GM12878 (cell line): ENCODE measurements at regions of chr1 and their contacts with region 1.

Region 1: DNA sequence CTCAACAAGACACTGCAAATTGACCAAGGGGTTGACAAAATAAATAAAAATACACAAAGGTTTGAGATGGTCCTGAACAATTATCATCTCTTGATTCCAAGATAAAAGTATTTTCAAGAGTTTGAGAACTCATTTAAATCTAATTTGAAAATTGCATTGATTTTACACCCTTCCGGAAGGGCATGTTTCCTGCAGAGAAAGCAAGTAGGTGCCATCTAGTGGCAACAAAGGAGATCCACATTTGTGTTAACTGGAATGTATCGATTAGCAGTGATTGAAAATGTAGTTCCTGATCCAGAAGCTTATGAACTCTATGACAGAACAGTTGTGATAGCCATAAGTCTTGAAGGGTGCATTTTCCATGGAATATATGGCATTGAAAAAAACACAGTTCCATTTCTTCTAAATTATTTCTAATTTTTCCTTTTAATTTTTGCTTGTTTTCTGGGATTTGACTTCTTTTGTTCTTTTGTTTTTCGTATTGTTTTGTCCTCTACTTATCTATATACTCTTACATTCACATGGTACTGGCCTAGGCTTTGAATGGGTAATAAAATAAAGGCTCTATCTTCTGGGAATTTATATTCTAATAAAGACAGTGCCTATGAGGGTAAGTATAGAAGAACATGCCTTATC is 143.7 kb downstream of the DNM3 start:
- DNase-seq: no peak
- ATAC-seq: peak; percentile 88
- H3K4me3 ChIP-seq: no peak overlapping the region
- H3K27ac ChIP-seq: no peak overlapping the region
- H3K4me1 ChIP-seq: no peaks in the 10 kb centered on the region
- H3K27me3 ChIP-seq: no peaks in the 10 kb centered on the region; a peak in 1 of 4 replicates
- CTCF ChIP-seq: peak; percentile 71 to 77 (median 74)
- EP300 ChIP-seq: no peak
- POLR2A ChIP-seq: no peak
- RAD21 ChIP-seq: peak; percentile 76

Region 2: DNA sequence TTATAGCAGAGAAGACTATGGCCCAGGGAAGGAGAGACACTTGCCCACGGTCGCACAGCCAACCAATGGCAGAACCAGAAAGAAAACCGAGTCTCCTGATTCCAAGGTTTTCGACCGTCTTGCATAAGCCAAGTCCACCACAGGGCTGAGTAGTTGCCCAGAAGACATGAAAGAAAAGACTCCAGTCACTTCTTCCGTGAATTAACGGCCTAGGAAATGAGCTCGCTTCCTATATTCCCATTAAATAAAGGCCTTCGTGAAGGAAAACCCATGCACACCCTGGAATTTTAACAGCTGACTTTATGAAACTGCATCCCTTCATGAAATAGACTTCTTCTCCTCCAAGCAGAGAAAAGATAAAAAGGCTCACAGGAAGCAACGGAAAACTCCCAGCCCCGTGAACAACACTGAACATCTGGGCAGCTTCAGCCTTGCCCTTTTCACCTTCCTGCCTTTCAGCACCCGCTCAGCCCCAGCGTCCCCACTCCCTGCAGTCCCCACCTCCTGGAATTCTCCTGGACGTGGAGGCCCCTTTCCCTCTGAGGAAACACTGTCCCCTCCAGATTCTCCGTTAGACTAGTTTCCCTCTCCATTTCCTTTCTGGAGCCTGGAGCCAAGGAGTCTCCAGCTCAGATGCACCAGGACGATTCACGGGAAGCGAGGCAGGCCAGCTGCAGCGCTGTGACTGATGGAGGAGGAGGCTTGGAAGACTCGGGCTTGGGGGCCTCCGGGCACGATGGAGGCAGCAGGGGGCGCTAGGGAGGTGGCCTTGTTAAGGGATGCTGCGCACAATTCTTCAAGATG is 329.8 kb before region 1 on chr1:
- CTCF ChIA-PET with region 1: interaction called, 14 read pairs
- POLR2A ChIA-PET with region 1: no interaction called
- RAD21 ChIA-PET with region 1: interaction called, 4 read pairs
- SMC1A ChIA-PET with region 1: interaction called, 6 read pairs
- in situ Hi-C with region 1: no loop called
- intact Hi-C with region 1: loop called (anchors 2 kb)
- DNase-seq: no peak
- ATAC-seq: peak; percentile 97
- H3K4me3 ChIP-seq: no peak overlapping the region
- H3K27ac ChIP-seq: no peak overlapping the region
- H3K4me1 ChIP-seq: no peaks in the 10 kb centered on the region
- H3K27me3 ChIP-seq: peaks cover 0 to 3% of the 10 kb centered on the region in 2 experiments; a peak in 1 of 4 replicates
- CTCF ChIP-seq: peak; percentile 62 to 89 (median 86)
- EP300 ChIP-seq: no peak
- POLR2A ChIP-seq: no peak
- RAD21 ChIP-seq: peak; percentile 62

Region 3: GRCh38 chr1:171809834-171810233 is 175.1 kb before region 1 on chr1:
- CTCF ChIA-PET with region 1: interaction called, 322 read pairs
- POLR2A ChIA-PET with region 1: no interaction called
- RAD21 ChIA-PET with region 1: interaction called, 20 read pairs
- SMC1A ChIA-PET with region 1: interaction called, 142 read pairs
- in situ Hi-C with region 1: loop called (anchors 5 kb)
- intact Hi-C with region 1: no loop called
- DNase-seq: no peak
- ATAC-seq: no peak
- H3K4me3 ChIP-seq: no peak overlapping the region
- H3K27ac ChIP-seq: no peak overlapping the region
- H3K4me1 ChIP-seq: peaks cover 7% of the 10 kb centered on the region
- H3K27me3 ChIP-seq: no peaks in the 10 kb centered on the region
- CTCF ChIP-seq: no peak
- EP300 ChIP-seq: no peak
- POLR2A ChIP-seq: no peak
- RAD21 ChIP-seq: no peak

Region 4: DNA sequence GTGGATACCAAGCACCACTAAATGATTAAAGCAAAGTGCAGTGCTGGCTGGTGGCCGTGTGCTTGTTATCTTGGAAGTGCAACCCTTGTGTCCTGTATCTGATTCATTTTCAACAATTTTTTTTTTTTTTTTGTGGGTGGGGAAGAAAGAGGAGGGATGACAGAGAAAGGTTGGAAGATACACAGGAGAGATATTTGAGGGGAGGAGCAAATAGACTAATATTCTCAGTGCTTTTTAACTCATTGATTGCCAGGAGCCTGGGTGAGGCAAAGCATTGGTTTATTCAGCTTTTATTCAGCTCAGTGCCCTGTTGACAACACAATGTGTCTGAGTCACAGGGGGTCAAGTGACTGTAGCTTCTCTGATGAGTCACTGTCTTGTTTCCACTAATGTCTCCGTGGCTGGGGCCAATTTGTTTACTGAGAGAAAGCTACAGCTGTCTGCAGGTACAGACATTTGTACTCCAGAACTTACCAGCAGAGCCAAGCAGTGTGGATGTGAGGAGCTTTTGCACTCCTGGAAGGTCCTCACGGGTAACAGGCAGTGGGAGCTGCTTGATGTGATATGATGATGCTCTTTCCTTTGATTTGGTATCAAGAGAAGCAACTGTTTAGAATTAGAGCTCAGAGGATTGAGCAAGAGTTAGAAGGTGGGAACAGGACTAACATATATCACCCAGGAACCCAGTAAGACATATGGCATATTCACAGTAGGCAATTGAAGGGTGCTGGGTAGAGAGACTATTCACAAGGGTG is 167.3 kb before region 1 on chr1:
- CTCF ChIA-PET with region 1: interaction called, 10 read pairs
- POLR2A ChIA-PET with region 1: no interaction called
- RAD21 ChIA-PET with region 1: no interaction called
- SMC1A ChIA-PET with region 1: interaction called, 4 read pairs
- in situ Hi-C with region 1: no loop called
- intact Hi-C with region 1: no loop called
- DNase-seq: no peak
- ATAC-seq: peak; percentile 76
- H3K4me3 ChIP-seq: no peak overlapping the region
- H3K27ac ChIP-seq: no peak overlapping the region
- H3K4me1 ChIP-seq: no peaks in the 10 kb centered on the region
- H3K27me3 ChIP-seq: no peaks in the 10 kb centered on the region
- CTCF ChIP-seq: no peak
- EP300 ChIP-seq: no peak
- POLR2A ChIP-seq: no peak
- RAD21 ChIP-seq: no peak

Region 5: DNA sequence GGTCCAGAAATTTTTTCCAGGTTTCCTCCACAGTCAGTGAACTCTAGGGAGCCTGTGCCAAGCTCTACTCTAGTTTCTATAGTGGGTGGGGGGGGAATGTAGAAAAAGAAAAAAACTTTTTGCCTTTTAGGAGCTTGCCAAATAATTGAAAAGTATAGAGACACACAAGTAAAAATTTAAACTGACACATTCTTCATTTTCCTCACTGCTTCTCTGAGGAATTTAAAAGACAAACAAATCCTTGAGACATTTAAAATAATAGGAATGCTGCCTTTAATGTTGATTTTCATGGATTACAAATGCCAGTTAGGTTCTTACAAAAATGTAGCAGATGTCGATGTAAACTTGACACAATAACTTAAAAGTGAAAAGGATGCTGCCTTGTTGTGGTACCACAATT is 98.2 kb after region 1 on chr1:
- CTCF ChIA-PET with region 1: no interaction called
- POLR2A ChIA-PET with region 1: no interaction called
- RAD21 ChIA-PET with region 1: no interaction called
- SMC1A ChIA-PET with region 1: no interaction called
- in situ Hi-C with region 1: no loop called
- intact Hi-C with region 1: no loop called
- DNase-seq: no peak
- ATAC-seq: no peak
- H3K4me3 ChIP-seq: no peak overlapping the region
- H3K27ac ChIP-seq: no peak overlapping the region
- H3K4me1 ChIP-seq: no peaks in the 10 kb centered on the region
- H3K27me3 ChIP-seq: no peaks in the 10 kb centered on the region
- CTCF ChIP-seq: no peak
- EP300 ChIP-seq: no peak
- POLR2A ChIP-seq: no peak
- RAD21 ChIP-seq: no peak

Region 6: DNA sequence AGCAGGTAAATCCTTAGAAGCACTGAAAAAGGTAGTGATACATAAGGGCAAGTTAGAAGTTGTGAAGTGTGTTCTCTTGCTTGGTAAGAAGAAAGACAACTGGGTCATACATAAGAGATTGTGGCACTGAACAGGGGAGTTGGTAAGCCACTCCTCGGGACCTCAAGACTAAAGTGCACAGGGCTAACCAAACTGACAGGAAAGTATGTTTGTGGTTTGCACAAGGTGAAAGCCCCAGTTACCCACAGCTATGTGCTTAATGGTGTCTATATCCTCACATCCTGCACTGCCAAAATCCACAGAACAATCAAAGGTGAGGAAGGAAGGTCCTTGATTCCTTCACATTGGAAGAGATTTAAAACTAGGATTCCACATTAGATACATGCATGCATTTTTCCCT is 132.8 kb after region 1 on chr1:
- CTCF ChIA-PET with region 1: no interaction called
- POLR2A ChIA-PET with region 1: no interaction called
- RAD21 ChIA-PET with region 1: no interaction called
- SMC1A ChIA-PET with region 1: no interaction called
- in situ Hi-C with region 1: no loop called
- intact Hi-C with region 1: no loop called
- DNase-seq: peak; percentile 65
- ATAC-seq: peak; percentile 97
- H3K4me3 ChIP-seq: no peak overlapping the region
- H3K27ac ChIP-seq: peak overlapping the region; percentile 44
- H3K4me1 ChIP-seq: peaks cover 3% of the 10 kb centered on the region; the same call in 1 of the 2 replicates
- H3K27me3 ChIP-seq: no peaks in the 10 kb centered on the region
- CTCF ChIP-seq: no peak
- EP300 ChIP-seq: no peak
- POLR2A ChIP-seq: no peak
- RAD21 ChIP-seq: no peak